PC-9 (cell line): ENCODE measurements at regions of chr1 and their contacts with region 1.

Region 1: GRCh38 chr1:17274186-17275170 is 25.6 kb downstream of the PADI3 start:
- DNase-seq: peak; percentile 37 to 71
- H3K4me3 ChIP-seq: no peak overlapping the region
- H3K27ac ChIP-seq: no peak overlapping the region
- H3K4me1 ChIP-seq: peaks cover 24% of the 10 kb centered on the region
- H3K27me3 ChIP-seq: no peaks in the 10 kb centered on the region
- CTCF ChIP-seq: peak; percentile 75

Region 2: GRCh38 chr1:16984717-16985116 is 289.8 kb before region 1 on chr1:
- CTCF ChIA-PET with region 1: no interaction called
- POLR2A ChIA-PET with region 1: interaction called, 26 read pairs
- intact Hi-C with region 1: no loop called
- DNase-seq: peak; percentile 70 to 81
- H3K4me3 ChIP-seq: no peak overlapping the region
- H3K27ac ChIP-seq: peak overlapping the region; percentile 43; the same call in 1 of the 2 replicates
- H3K4me1 ChIP-seq: peaks cover 11% of the 10 kb centered on the region
- H3K27me3 ChIP-seq: no peaks in the 10 kb centered on the region
- CTCF ChIP-seq: no peak

Region 3: GRCh38 chr1:17053685-17054410 is 220.6 kb before region 1 on chr1 and contains the start of gene SDHB:
- CTCF ChIA-PET with region 1: no interaction called
- POLR2A ChIA-PET with region 1: no interaction called
- intact Hi-C with region 1: loop called (anchors 10 kb)
- DNase-seq: peak; percentile 84 to 98
- H3K4me3 ChIP-seq: peak within 1 kb of the TSS; percentile 71
- H3K27ac ChIP-seq: peak within 1 kb of the TSS; percentile 38; the same call in 1 of the 2 replicates
- H3K4me1 ChIP-seq: peaks cover 7% of the 10 kb centered on the region; the same call in 1 of the 2 replicates
- H3K27me3 ChIP-seq: no peaks in the 10 kb centered on the region
- CTCF ChIP-seq: no peak
- total RNA-seq, gene SDHB: 101 and 123 TPM in 2 replicates

Region 4: GRCh38 chr1:17075470-17076255 is 198.8 kb before region 1 on chr1:
- CTCF ChIA-PET with region 1: no interaction called
- POLR2A ChIA-PET with region 1: no interaction called
- intact Hi-C with region 1: no loop called
- DNase-seq: no peak
- H3K4me3 ChIP-seq: no peak overlapping the region
- H3K27ac ChIP-seq: no peak overlapping the region
- H3K4me1 ChIP-seq: no peaks in the 10 kb centered on the region
- H3K27me3 ChIP-seq: no peaks in the 10 kb centered on the region
- CTCF ChIP-seq: peak; percentile 53

Region 5: DNA sequence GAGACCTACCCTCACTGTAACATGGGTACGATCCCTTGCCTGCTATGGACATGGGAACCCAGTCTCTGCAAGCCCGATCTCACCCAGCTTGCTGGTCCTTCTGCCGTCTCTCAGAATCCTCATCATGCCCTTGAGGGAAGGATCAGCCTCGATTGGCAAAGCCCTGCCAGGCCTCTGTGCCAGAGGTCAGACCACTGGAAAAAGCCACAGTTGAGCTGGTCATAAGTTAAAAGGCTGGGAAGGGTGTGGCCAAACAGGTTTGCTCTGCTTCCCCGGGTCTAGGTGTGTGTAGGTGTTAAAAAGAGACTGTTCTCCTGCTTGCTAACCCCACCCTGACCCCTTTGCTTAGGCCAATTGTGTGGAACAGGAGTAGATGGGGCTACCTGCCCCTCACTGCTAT is 45.1 kb before region 1 on chr1:
- CTCF ChIA-PET with region 1: no interaction called
- POLR2A ChIA-PET with region 1: interaction called, 12 read pairs
- intact Hi-C with region 1: no loop called
- DNase-seq: peak; percentile 75 to 87
- H3K4me3 ChIP-seq: no peak overlapping the region; the same call in 1 of the 2 replicates
- H3K27ac ChIP-seq: peak overlapping the region; percentile 100
- H3K4me1 ChIP-seq: peaks cover 89% of the 10 kb centered on the region
- H3K27me3 ChIP-seq: no peaks in the 10 kb centered on the region
- CTCF ChIP-seq: no peak

Region 6: GRCh38 chr1:17335821-17336710 is 61.6 kb after region 1 on chr1:
- CTCF ChIA-PET with region 1: interaction called, 11 read pairs
- POLR2A ChIA-PET with region 1: no interaction called
- intact Hi-C with region 1: loop called (anchors 2 kb)
- DNase-seq: peak; percentile 55 to 79
- H3K4me3 ChIP-seq: no peak overlapping the region
- H3K27ac ChIP-seq: no peak overlapping the region
- H3K4me1 ChIP-seq: no peaks in the 10 kb centered on the region; the same call in 1 of the 2 replicates
- H3K27me3 ChIP-seq: no peaks in the 10 kb centered on the region
- CTCF ChIP-seq: peak; percentile 86

Region 7: GRCh38 chr1:17405898-17406759 is 131.7 kb after region 1 on chr1:
- CTCF ChIA-PET with region 1: interaction called, 3 read pairs
- POLR2A ChIA-PET with region 1: no interaction called
- intact Hi-C with region 1: loop called (anchors 1 kb)
- DNase-seq: peak; percentile 39 to 73
- H3K4me3 ChIP-seq: no peak overlapping the region
- H3K27ac ChIP-seq: no peak overlapping the region
- H3K4me1 ChIP-seq: peaks cover 11% of the 10 kb centered on the region
- H3K27me3 ChIP-seq: no peaks in the 10 kb centered on the region
- CTCF ChIP-seq: peak; percentile 78